CD4-positive, alpha-beta T cell (primary cell): ENCODE measurements at regions of chr3 and their contacts with region 1.

Region 1: DNA sequence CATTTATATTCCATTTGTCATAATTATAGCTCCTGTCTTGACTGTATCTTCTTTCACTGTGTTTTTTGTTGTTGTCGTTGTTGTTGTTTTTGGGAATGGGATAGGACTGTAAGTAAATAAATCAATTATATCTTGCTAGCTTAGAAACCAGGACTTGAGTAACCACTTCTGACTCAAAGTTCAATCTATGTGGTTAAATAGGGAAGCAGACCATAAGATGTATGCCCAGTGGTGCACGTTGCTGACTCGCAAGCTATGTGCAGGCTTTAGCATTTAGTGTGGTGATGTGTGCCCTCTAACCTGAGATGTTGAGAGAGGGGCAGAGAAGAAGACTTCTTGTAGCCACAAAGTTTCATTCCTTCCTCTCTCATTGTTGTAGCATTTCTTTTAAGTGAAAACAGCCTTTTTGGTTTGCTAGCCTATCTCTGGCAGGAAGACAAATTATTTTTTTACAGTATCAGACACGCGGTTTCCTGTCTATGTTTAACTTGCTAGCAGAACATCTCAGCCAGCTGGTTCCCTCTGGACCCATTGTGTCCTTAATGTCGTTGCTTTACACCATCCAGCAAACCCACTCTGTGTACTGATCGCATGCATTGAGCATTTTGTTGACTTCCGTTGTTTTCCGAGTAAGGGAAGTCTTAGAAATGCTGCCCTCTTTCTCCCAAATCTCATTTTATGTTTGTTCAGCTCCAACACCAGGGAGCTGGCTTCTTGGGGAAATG is 52.1 kb downstream of the TGFBR2 start:
- DNase-seq: peak in 13 of 14 experiments; percentile 28 to 83 (median 47)
- ATAC-seq: peak; percentile 54
- H3K4me3 ChIP-seq: peak overlapping the region; percentile 6
- H3K4me3 Mint-ChIP-seq: peak overlapping the region; percentile 88
- H3K27ac ChIP-seq: peak overlapping the region; percentile 85 to 96
- H3K27ac Mint-ChIP-seq: peak overlapping the region; percentile 96
- H3K4me1 ChIP-seq: peaks cover 80% of the 10 kb centered on the region
- H3K4me1 Mint-ChIP-seq: peaks cover 93% of the 10 kb centered on the region
- H3K27me3 ChIP-seq: no peaks in the 10 kb centered on the region
- H3K27me3 Mint-ChIP-seq: no peaks in the 10 kb centered on the region
- CTCF ChIP-seq: no peak

Region 2: GRCh38 chr3:30353711-30354467 is 304.6 kb before region 1 on chr3:
- CTCF ChIA-PET with region 1: no interaction called
- POLR2A ChIA-PET with region 1: interaction called, 5 read pairs
- intact Hi-C with region 1: loop called in 1 of 2 experiments (anchors 5 kb)
- DNase-seq: peak in 13 of 14 experiments; percentile 10 to 96 (median 35)
- ATAC-seq: peak; percentile 98
- H3K4me3 ChIP-seq: no peak overlapping the region
- H3K4me3 Mint-ChIP-seq: peak overlapping the region; percentile 76
- H3K27ac ChIP-seq: no peak overlapping the region
- H3K27ac Mint-ChIP-seq: peak overlapping the region; percentile 86
- H3K4me1 ChIP-seq: peaks cover 45% of the 10 kb centered on the region
- H3K4me1 Mint-ChIP-seq: peaks cover 91% of the 10 kb centered on the region
- H3K27me3 ChIP-seq: no peaks in the 10 kb centered on the region
- H3K27me3 Mint-ChIP-seq: no peaks in the 10 kb centered on the region
- CTCF ChIP-seq: no peak

Region 3: DNA sequence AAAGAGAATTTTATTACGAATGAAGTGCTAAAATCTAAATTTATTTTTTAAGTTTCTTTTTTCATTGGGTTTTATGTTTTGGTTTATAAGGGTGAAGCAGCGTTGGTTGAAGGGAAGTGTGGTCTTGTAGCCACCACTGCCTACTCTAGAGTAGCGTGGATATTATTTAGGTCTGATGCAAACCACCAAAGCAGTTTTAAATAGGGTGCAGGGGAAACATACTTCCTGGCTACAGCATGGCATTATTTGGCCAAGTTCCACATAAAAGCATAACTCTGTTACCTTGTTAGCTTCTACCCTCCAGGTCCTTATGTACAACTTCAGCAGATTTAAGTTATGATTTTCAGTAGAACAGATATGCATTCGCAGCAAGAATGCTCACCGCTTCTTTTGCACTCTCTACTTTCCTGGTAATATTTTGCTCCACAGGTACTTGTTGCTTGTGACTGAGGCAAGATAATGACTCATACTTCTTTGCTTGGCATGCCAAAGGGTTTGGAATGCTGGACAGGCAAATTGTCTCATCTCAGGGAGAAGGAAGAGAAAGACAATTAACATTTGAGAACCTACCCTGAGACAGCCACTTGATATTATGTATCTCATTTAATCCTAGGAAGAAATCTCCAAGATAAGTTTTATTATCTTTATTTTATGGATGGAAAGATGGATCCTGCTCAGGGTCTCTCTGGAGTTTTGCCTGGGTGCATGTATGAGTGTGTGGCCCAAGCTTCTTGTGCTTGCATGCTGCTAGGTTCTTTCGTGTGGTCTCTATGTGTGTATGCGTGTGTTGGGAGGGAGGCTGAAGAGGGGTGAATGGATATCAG is 46.7 kb before region 1 on chr3:
- CTCF ChIA-PET with region 1: interaction called, 13 read pairs
- POLR2A ChIA-PET with region 1: interaction called, 176 read pairs
- intact Hi-C with region 1: loop called in 1 of 2 experiments (anchors 1 kb)
- DNase-seq: peak in 3 of 14 experiments; percentile 58 to 70 (median 62)
- ATAC-seq: peak; percentile 30
- H3K4me3 ChIP-seq: peak overlapping the region; percentile 73
- H3K4me3 Mint-ChIP-seq: peak overlapping the region; percentile 97
- H3K27ac ChIP-seq: peak overlapping the region; percentile 55 to 60
- H3K27ac Mint-ChIP-seq: peak overlapping the region; percentile 96
- H3K4me1 ChIP-seq: peaks cover 35% of the 10 kb centered on the region
- H3K4me1 Mint-ChIP-seq: peaks cover 70% of the 10 kb centered on the region
- H3K27me3 ChIP-seq: no peaks in the 10 kb centered on the region
- H3K27me3 Mint-ChIP-seq: no peaks in the 10 kb centered on the region
- CTCF ChIP-seq: no peak

Region 4: DNA sequence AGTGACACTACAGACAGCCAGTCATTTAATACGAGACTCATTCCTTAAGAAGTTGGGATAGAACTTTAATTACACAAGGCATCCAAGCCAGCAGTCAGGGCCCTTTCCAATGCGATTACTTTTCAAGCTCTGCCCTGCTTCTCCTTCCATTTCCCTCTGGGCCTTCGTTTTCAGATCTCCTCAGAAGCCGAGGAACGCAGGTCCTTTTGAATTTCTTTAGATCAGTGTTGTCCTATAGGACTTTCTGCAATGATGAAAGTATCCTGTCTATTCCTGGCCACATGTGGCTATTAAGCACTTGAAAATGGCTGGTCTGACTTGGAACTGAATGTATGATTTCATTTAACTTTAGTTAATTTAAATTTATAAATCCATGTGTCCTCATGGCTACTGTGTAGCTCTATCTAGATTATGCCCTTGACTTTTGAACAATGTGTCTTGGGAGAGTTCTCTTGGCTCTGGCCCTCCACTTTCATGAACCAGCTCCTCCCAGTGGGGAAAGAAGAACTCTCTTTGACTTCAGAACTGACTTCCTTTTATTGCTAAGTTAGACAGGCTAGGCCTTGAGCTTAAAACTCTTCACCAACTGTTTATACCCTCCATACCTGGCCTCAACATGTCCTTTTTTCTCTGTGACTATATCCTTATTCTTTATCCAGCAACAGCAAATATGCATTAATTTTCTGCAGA is 29.4 kb before region 1 on chr3:
- CTCF ChIA-PET with region 1: interaction called, 10 read pairs
- POLR2A ChIA-PET with region 1: interaction called, 297 read pairs
- intact Hi-C with region 1: loop called in 1 of 2 experiments (anchors 1 kb)
- DNase-seq: peak in 4 of 14 experiments; percentile 43 to 75 (median 73)
- ATAC-seq: peak; percentile 32
- H3K4me3 ChIP-seq: no peak overlapping the region
- H3K4me3 Mint-ChIP-seq: peak overlapping the region; percentile 68
- H3K27ac ChIP-seq: peak overlapping the region; percentile 77 to 90
- H3K27ac Mint-ChIP-seq: peak overlapping the region; percentile 96
- H3K4me1 ChIP-seq: peaks cover 74% of the 10 kb centered on the region
- H3K4me1 Mint-ChIP-seq: peaks cover 100% of the 10 kb centered on the region
- H3K27me3 ChIP-seq: no peaks in the 10 kb centered on the region
- H3K27me3 Mint-ChIP-seq: no peaks in the 10 kb centered on the region
- CTCF ChIP-seq: peak; percentile 40

Region 5: DNA sequence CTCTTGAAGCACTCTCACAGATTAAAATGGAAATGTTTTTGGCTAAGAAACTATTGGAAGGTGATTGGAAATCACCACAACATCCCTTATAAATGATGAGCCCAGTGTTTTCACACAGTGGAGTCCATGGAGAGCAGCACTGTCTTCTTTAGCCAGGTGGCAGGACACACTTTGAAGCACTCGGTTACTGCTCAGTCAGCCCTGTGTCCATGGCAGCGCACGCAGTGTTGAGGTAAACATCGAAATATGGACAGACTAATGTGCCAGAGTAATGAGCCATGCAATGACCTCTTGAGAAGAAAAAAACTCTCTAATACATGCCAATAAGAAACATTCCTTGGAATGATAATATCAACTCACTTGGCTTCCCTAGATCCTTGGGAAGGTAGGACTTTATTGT is 14.5 kb after region 1 on chr3:
- CTCF ChIA-PET with region 1: interaction called, 6 read pairs
- POLR2A ChIA-PET with region 1: interaction called, 107 read pairs
- intact Hi-C with region 1: no loop called
- DNase-seq: no peak
- ATAC-seq: no peak
- H3K4me3 ChIP-seq: peak overlapping the region; percentile 36
- H3K4me3 Mint-ChIP-seq: peak overlapping the region; percentile 59
- H3K27ac ChIP-seq: peak overlapping the region in 1 of 2 donors; percentile 7
- H3K27ac Mint-ChIP-seq: peak overlapping the region; percentile 86
- H3K4me1 ChIP-seq: peaks cover 53% of the 10 kb centered on the region
- H3K4me1 Mint-ChIP-seq: peaks cover 100% of the 10 kb centered on the region
- H3K27me3 ChIP-seq: no peaks in the 10 kb centered on the region
- H3K27me3 Mint-ChIP-seq: no peaks in the 10 kb centered on the region
- CTCF ChIP-seq: no peak

Region 6: GRCh38 chr3:30704931-30705890 is 46.7 kb after region 1 on chr3:
- CTCF ChIA-PET with region 1: no interaction called
- POLR2A ChIA-PET with region 1: no interaction called
- intact Hi-C with region 1: no loop called
- DNase-seq: no peak
- ATAC-seq: no peak
- H3K4me3 ChIP-seq: no peak overlapping the region
- H3K4me3 Mint-ChIP-seq: no peak overlapping the region
- H3K27ac ChIP-seq: no peak overlapping the region
- H3K27ac Mint-ChIP-seq: peak overlapping the region; percentile 11
- H3K4me1 ChIP-seq: no peaks in the 10 kb centered on the region
- H3K4me1 Mint-ChIP-seq: peaks cover 55% of the 10 kb centered on the region
- H3K27me3 ChIP-seq: no peaks in the 10 kb centered on the region
- H3K27me3 Mint-ChIP-seq: no peaks in the 10 kb centered on the region
- CTCF ChIP-seq: no peak

Region 7: DNA sequence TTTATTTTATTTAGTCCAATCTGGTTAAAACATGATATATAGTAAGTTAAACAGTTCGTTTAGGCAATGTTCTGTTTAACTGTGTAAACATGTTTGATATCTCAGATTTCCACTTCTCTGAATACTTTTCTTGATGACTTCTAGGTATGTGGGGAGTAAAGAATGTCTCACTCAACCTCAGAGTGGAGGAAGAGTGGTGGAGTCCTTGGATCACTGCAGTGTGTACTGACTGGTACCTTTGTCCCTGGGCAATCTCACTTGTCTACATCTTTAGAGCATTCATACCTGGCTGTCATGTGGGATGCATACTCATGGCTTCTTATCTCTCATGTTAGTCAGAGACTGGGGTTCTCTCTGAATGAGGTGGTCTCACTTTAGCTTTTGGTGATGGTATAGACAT is 220.4 kb after region 1 on chr3:
- CTCF ChIA-PET with region 1: no interaction called
- POLR2A ChIA-PET with region 1: no interaction called
- intact Hi-C with region 1: no loop called
- DNase-seq: no peak
- ATAC-seq: no peak
- H3K4me3 ChIP-seq: no peak overlapping the region
- H3K4me3 Mint-ChIP-seq: no peak overlapping the region
- H3K27ac ChIP-seq: no peak overlapping the region
- H3K27ac Mint-ChIP-seq: no peak overlapping the region
- H3K4me1 ChIP-seq: no peaks in the 10 kb centered on the region
- H3K4me1 Mint-ChIP-seq: no peaks in the 10 kb centered on the region
- H3K27me3 ChIP-seq: peaks cover 0 to 1% of the 10 kb centered on the region in 2 experiments
- H3K27me3 Mint-ChIP-seq: peaks cover 5% of the 10 kb centered on the region
- CTCF ChIP-seq: no peak

Region 8: GRCh38 chr3:32420126-32421038 is 1761.9 kb after region 1 on chr3:
- CTCF ChIA-PET with region 1: no interaction called
- POLR2A ChIA-PET with region 1: no interaction called
- intact Hi-C with region 1: loop called in 1 of 2 experiments (anchors 10 kb)
- DNase-seq: peak in 4 of 14 experiments; percentile 39 to 55 (median 44)
- ATAC-seq: peak; percentile 35
- H3K4me3 ChIP-seq: no peak overlapping the region
- H3K4me3 Mint-ChIP-seq: peak overlapping the region; percentile 71
- H3K27ac ChIP-seq: peak overlapping the region; percentile 44 to 48
- H3K27ac Mint-ChIP-seq: peak overlapping the region; percentile 95
- H3K4me1 ChIP-seq: peaks cover 69% of the 10 kb centered on the region
- H3K4me1 Mint-ChIP-seq: peaks cover 99% of the 10 kb centered on the region
- H3K27me3 ChIP-seq: no peaks in the 10 kb centered on the region
- H3K27me3 Mint-ChIP-seq: no peaks in the 10 kb centered on the region
- CTCF ChIP-seq: no peak